MCF 10A (cell line): ENCODE measurements at regions of chr17 and their contacts with region 1.

Region 1: GRCh38 chr17:1793447-1793806 is 31.6 kb downstream of the SERPINF1 start:
- DNase-seq: peak; percentile 54
- H3K4me3 Mint-ChIP-seq: peak overlapping the region; percentile 31
- H3K27ac Mint-ChIP-seq: peak overlapping the region; percentile 74
- H3K4me1 Mint-ChIP-seq: peaks cover 5% of the 10 kb centered on the region
- H3K27me3 Mint-ChIP-seq: no peaks in the 10 kb centered on the region
- CTCF ChIP-seq: no peak

Region 2: DNA sequence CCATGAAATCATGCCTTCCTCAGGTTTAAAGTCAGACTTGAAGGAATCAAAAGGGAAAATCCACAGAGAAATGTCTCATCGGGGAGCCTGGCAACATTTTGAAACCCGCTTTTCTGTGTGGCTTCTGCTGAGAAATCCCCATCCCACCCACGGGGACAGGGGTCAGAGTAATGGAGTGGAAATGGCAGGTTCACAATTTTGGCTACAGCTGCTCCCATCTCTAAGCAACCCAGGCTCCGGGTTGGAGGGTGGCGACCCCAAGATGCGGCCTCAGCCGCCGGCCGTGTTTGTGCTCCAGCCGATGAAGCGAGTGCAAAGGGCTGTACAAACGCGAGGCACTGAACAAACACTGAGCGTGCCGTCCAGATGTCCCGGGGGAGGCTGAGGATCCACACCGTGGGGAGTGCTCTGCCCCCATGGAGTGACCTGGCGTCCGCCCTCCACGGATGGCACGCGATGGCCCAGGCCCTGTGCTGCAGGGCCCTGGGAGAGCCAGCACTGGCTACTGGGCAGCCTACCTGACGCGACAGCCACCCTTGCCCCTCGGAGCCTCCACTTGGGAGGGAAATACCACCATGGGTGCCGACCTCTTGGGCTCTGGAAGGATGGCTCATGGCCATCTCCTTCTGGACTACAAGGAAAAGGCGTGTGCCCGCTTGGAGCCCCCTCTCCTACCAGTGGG is 186.9 kb before region 1 on chr17:
- CTCF ChIA-PET with region 1: no interaction called
- POLR2A ChIA-PET with region 1: no interaction called
- intact Hi-C with region 1: no loop called
- DNase-seq: no peak
- H3K4me3 Mint-ChIP-seq: no peak overlapping the region
- H3K27ac Mint-ChIP-seq: no peak overlapping the region
- H3K4me1 Mint-ChIP-seq: no peaks in the 10 kb centered on the region
- H3K27me3 Mint-ChIP-seq: no peaks in the 10 kb centered on the region
- CTCF ChIP-seq: no peak

Region 3: GRCh38 chr17:1764284-1764683 is 29.1 kb before region 1 on chr17:
- CTCF ChIA-PET with region 1: interaction called, 4 read pairs
- POLR2A ChIA-PET with region 1: interaction called, 35 read pairs
- intact Hi-C with region 1: no loop called
- DNase-seq: no peak
- H3K4me3 Mint-ChIP-seq: no peak overlapping the region
- H3K27ac Mint-ChIP-seq: peak overlapping the region; percentile 46
- H3K4me1 Mint-ChIP-seq: no peaks in the 10 kb centered on the region
- H3K27me3 Mint-ChIP-seq: no peaks in the 10 kb centered on the region
- CTCF ChIP-seq: no peak

Region 4: DNA sequence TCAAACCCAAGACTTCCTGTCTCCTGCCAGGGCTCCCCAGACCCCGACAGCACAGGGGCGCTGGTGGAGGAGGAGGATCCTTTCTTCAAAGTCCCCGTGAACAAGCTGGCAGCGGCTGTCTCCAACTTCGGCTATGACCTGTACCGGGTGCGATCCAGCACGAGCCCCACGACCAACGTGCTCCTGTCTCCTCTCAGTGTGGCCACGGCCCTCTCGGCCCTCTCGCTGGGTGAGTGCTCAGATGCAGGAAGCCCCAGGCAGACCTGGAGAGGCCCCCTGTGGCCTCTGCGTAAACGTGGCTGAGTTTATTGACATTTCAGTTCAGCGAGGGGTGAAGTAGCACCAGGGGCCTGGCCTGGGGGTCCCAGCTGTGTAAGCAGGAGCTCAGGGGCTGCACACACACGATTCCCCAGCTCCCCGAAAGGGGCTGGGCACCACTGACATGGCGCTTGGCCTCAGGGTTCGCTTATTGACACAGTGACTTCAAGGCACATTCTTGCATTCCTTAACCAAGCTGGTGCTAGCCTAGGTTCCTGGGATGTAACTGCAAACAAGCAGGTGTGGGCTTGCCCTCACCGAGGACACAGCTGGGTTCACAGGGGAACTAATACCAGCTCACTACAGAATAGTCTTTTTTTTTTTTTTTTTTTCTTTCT is 23.5 kb before region 1 on chr17:
- CTCF ChIA-PET with region 1: interaction called, 3 read pairs
- POLR2A ChIA-PET with region 1: interaction called, 35 read pairs
- intact Hi-C with region 1: no loop called
- DNase-seq: peak; percentile 70
- H3K4me3 Mint-ChIP-seq: no peak overlapping the region
- H3K27ac Mint-ChIP-seq: peak overlapping the region; percentile 71
- H3K4me1 Mint-ChIP-seq: peaks cover 11% of the 10 kb centered on the region
- H3K27me3 Mint-ChIP-seq: no peaks in the 10 kb centered on the region
- CTCF ChIP-seq: no peak

Region 5: DNA sequence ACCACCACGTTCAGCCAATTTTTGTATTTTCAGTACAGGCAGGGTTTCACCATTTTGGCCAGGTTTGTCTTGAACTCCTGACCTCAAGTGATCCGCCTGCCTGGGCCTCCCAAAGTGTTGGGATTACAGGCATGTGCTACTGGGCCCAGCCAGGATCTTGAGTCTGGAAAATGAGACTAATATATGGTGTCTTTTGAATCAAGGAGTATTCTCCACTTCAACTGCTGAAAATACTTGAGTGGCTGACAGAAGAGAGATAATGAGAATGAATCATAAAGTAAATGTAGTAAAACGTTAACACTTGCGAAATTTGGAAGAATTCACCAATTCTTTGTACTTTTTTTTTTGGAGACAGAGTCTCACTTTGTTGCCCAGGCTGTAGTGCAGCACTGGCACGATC is 19.7 kb after region 1 on chr17:
- CTCF ChIA-PET with region 1: no interaction called
- POLR2A ChIA-PET with region 1: interaction called, 18 read pairs
- intact Hi-C with region 1: no loop called
- DNase-seq: peak; percentile 2
- H3K4me3 Mint-ChIP-seq: no peak overlapping the region
- H3K27ac Mint-ChIP-seq: no peak overlapping the region
- H3K4me1 Mint-ChIP-seq: no peaks in the 10 kb centered on the region
- H3K27me3 Mint-ChIP-seq: no peaks in the 10 kb centered on the region
- CTCF ChIP-seq: no peak